Right cardiac atrium (tissue), 5 donors: ENCODE measurements at regions of chr9 and their contacts with region 1.

Region 1: DNA sequence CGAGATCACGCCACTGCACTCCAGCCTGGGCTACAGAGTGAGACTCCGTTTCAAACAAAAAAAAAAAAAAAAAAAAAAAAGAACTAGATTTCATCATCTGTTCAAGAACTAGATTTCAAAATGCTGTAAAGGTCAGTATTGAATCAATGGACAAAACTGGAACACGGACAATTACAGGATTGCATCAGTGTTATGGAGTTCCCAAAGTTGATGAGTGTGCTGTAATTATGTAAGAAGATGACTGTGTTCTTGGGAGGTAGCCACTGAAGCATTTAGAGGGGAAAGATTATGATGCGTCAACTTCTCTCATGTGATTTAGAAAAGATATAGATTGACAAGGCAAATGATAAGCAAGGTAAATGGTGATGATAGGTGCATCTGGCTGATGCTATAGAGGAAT is 6.5 kb downstream of the FAM240B start:
- DNase-seq: no peak
- ATAC-seq: peak; percentile 89 to 94
- H3K4me3 ChIP-seq: no peak overlapping the region
- H3K27ac ChIP-seq: no peak overlapping the region
- H3K4me1 ChIP-seq: no peaks in the 10 kb centered on the region
- H3K27me3 ChIP-seq: no peaks in the 10 kb centered on the region

Region 2: DNA sequence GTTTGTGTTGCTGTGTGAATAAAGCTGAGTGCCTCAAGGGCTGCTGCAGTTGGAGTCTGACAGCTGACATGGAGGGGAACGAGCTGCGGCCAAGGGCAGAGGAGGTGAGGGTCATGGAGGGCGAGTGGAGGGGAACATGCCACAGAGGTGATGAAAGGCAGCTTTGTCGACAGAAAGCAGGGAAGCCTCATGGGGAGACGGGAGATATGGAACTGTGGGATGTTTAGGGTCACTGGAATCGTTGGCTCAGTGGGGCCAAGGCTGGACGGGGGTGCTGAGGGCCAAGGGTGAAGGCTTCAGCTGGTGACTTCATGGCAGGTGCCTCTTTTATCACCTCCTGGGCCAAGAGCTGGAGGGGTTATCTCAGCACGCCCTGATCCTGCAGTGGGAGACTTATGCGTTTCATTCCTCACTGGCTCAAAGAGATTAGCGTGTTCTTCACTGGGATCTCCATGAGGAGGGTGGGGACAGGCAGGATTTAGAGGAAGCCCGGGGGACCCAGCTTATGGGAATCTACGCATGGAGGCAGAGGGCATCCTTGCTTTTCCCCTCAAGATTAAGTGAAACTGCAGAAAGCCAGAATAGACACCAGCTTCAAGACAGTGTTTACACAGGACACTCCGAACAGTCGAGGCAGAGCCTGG is 35.6 kb before region 1 on chr9:
- intact Hi-C with region 1: loop called in 1 of 4 experiments (anchors 2 kb)
- DNase-seq: peak in 2 of 3 donors; percentile 59 to 66
- ATAC-seq: peak; percentile 47 to 77
- H3K4me3 ChIP-seq: no peak overlapping the region
- H3K27ac ChIP-seq: no peak overlapping the region
- H3K4me1 ChIP-seq: no peaks in the 10 kb centered on the region
- H3K27me3 ChIP-seq: no peaks in the 10 kb centered on the region